ENCODE measurements at regions of chr5 and their contacts with region 1.

Region 1: DNA sequence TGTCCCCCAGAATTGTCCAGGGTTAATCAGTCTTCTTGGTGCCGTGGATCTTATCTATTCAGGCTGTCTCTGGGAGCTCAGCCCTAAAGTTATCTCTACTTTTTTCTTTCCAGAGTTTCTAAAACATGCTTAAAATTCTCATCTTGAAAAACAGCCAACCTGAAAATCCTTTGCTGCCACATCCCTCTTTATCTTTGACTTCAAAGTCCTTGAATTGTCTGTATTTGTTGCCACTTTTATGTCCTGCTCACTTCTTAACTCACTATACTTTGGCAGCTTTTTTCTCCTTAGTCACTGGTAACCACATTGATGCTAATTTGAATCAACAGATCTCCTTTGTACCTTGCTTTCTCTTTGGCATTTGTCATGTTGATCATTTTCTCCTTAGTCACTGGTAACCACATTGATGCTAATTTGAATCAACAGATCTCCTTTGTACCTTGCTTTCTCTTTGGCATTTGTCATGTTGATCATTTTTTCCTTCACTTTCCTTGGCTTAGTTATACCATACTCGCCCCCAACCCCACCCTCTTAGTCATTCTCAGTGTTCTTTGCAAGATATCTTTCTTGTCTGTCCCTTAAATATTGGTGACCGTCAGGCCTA is 8.5 kb downstream of the DMXL1 start:
- DNase-seq: peak; percentile 75
- ATAC-seq: peak; percentile 89
- H3K4me3 Mint-ChIP-seq: peak overlapping the region; percentile 49
- H3K27ac Mint-ChIP-seq: peak overlapping the region; percentile 84
- H3K4me1 Mint-ChIP-seq: peaks cover 46% of the 10 kb centered on the region
- H3K27me3 Mint-ChIP-seq: no peaks in the 10 kb centered on the region
- CTCF ChIP-seq: no peak

Region 2: DNA sequence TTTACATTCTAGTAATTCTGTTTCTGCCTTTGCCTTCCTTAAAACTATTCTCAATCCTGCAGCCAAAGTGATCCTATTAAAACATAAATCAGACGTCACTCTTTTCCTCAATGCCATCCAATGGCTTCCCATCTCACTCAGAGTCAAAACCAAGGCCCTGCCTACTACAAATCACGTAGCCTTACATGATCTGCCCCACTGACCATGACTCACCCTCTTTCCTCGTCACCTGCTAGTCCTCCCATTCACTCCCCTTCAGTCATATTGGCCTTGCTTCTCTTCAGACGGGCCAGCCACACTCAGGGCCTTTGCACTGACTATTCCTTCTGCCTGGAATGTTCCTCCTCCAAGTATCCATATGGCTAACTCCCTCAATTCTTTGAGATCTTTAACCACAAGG is 47.5 kb before region 1 on chr5:
- CTCF ChIA-PET with region 1: no interaction called
- POLR2A ChIA-PET with region 1: no interaction called
- intact Hi-C with region 1: loop called (anchors 1 kb)
- DNase-seq: peak; percentile 53
- ATAC-seq: peak; percentile 64
- H3K4me3 Mint-ChIP-seq: peak overlapping the region; percentile 28
- H3K27ac Mint-ChIP-seq: peak overlapping the region; percentile 91
- H3K4me1 Mint-ChIP-seq: peaks cover 31% of the 10 kb centered on the region
- H3K27me3 Mint-ChIP-seq: no peaks in the 10 kb centered on the region
- CTCF ChIP-seq: no peak

Measured in activated CD8-positive, alpha-beta T cell treated with anti-CD3 and anti-CD28 coated beads for 36 hours (primary cell).